ENCODE measurements at regions of chr5 and their contacts with region 1.

Region 1: DNA sequence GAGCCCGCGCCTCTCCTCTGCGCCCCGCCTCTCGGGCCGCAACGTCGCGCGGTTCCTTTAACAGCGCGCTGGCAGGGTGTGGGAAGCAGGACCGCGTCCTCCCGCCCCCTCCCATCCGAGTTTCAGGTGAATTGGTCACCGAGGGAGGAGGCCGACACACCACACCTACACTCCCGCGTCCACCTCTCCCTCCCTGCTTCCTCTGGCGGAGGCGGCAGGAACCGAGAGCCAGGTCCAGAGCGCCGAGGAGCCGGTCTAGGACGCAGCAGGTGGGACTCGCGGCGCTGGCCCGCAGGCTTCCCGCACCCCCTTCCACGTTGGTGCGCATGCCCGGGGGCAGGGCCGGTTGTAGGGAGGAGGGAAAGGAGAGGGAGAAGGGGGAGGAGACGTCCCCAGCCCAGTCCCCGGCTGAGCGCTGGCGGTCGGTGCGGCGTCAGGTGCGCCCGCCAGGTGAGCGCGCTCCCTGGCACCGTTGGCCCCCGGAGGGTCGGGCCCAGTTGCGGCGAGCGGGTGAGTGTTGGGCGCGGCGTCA is at the start of gene OCLN:
- DNase-seq: peak; percentile 89 to 90
- H3K4me3 ChIP-seq: peak within 1 kb of the TSS; percentile 71 to 84 (median 80)
- H3K27ac ChIP-seq: peak within 1 kb of the TSS; percentile 91 to 96 (median 94)
- H3K4me1 ChIP-seq: peaks cover 5 to 8% of the 10 kb centered on the region in 2 donors
- H3K27me3 ChIP-seq: no peaks in the 10 kb centered on the region
- CTCF ChIP-seq: peak in 1 of 6 experiments; percentile 33
- POLR2A ChIP-seq: peak; percentile 82 to 96
- total RNA-seq, gene OCLN: 148 to 248 (median 197) TPM

Region 2: DNA sequence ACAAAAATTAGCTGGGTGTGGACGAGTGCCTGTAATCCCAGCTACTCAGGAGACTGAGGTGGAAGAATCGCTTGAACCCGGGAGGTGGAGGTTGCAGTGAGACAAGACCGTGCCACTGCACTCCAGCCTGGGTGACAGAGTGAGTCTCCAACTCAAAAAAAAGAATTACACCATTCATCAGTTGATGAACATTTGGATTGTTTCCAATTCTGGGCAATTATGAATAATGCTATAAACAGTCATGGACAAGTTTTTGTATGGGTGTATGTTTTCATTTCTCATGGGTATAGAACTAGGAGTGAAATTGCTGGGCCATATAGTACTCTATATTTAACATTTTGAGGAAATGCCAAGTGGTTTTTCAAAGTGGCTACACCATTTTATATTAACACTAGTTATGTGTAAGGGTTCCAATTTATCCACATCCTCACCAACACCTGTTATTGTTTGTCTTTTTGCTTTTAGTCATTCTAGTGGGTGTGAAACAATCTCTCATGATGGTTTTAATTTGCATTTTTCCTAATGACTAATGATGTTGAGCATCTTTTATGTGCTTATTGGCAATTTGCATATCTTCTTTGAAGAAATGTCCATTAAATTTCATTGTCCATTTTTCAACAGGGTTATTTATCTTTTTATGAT is 150.8 kb before region 1 on chr5:
- intact Hi-C with region 1: no loop called
- DNase-seq: no peak
- H3K4me3 ChIP-seq: no peak overlapping the region
- H3K27ac ChIP-seq: no peak overlapping the region
- H3K4me1 ChIP-seq: no peaks in the 10 kb centered on the region
- H3K27me3 ChIP-seq: no peaks in the 10 kb centered on the region
- CTCF ChIP-seq: no peak
- POLR2A ChIP-seq: no peak

Region 3: GRCh38 chr5:69414885-69415583 is 77.4 kb before region 1 on chr5 and contains the start of gene MARVELD2:
- intact Hi-C with region 1: loop called (anchors 5 kb)
- DNase-seq: peak; percentile 99
- H3K4me3 ChIP-seq: peak within 1 kb of the TSS; percentile 35 to 67 (median 63)
- H3K27ac ChIP-seq: peak within 1 kb of the TSS; percentile 88 to 99 (median 96)
- H3K4me1 ChIP-seq: peaks cover 11 to 27% of the 10 kb centered on the region in 2 donors
- H3K27me3 ChIP-seq: no peaks in the 10 kb centered on the region
- CTCF ChIP-seq: peak; percentile 46 to 85 (median 60)
- POLR2A ChIP-seq: peak; percentile 81 to 96
- total RNA-seq, gene MARVELD2: 61.8 to 100 (median 81.9) TPM

Region 4: GRCh38 chr5:69432412-69433206 is 59.8 kb before region 1 on chr5:
- intact Hi-C with region 1: no loop called
- DNase-seq: no peak
- H3K4me3 ChIP-seq: no peak overlapping the region
- H3K27ac ChIP-seq: no peak overlapping the region
- H3K4me1 ChIP-seq: peaks cover 0 to 6% of the 10 kb centered on the region in 2 donors
- H3K27me3 ChIP-seq: no peaks in the 10 kb centered on the region
- CTCF ChIP-seq: no peak
- POLR2A ChIP-seq: no peak

Measured in thyroid gland (tissue), 4 donors.